PC-9 (cell line): ENCODE measurements at regions of chr3 and their contacts with region 1.

Region 1: GRCh38 chr3:30597131-30597768 is 9.2 kb upstream of the TGFBR2 start:
- DNase-seq: peak; percentile 47 to 94
- H3K4me3 ChIP-seq: no peak overlapping the region
- H3K27ac ChIP-seq: peak overlapping the region; percentile 80
- H3K4me1 ChIP-seq: peaks cover 23% of the 10 kb centered on the region
- H3K27me3 ChIP-seq: no peaks in the 10 kb centered on the region
- CTCF ChIP-seq: no peak

Region 2: GRCh38 chr3:30548600-30548999 is 48.6 kb before region 1 on chr3:
- CTCF ChIA-PET with region 1: interaction called, 10 read pairs
- POLR2A ChIA-PET with region 1: no interaction called
- intact Hi-C with region 1: no loop called
- DNase-seq: no peak
- H3K4me3 ChIP-seq: no peak overlapping the region
- H3K27ac ChIP-seq: no peak overlapping the region
- H3K4me1 ChIP-seq: no peaks in the 10 kb centered on the region
- H3K27me3 ChIP-seq: no peaks in the 10 kb centered on the region
- CTCF ChIP-seq: no peak